Caco-2 (cell line): ENCODE measurements at regions of chr18 and their contacts with region 1.

Region 1: DNA sequence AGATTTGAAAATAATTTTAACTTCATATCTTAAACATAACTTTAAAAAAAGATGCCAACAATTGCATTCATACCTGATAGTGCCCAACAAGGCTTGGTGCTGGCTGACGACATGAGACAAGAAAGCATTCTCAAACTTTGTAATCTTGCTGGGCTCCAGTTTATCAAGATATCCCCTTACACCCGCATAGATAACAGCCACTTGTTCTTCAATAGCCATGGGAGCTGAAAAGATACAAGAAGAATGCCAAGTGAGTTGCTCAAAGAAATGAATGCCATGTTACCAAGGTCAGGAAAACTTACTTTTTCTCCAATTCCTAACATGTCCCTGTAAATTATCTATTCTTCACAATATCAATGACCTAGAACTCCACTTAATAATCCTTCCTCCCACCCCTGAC is 12.4 kb upstream of the PSTPIP2 start:
- DNase-seq: no peak
- H3K4me3 ChIP-seq: no peak overlapping the region
- H3K4me3 Mint-ChIP-seq: no peak overlapping the region
- H3K27ac Mint-ChIP-seq: no peak overlapping the region
- H3K4me1 ChIP-seq: peaks cover 22% of the 10 kb centered on the region
- H3K4me1 Mint-ChIP-seq: peaks cover 7% of the 10 kb centered on the region
- H3K27me3 ChIP-seq: no peaks in the 10 kb centered on the region
- H3K27me3 Mint-ChIP-seq: no peaks in the 10 kb centered on the region
- CTCF ChIP-seq: no peak

Region 2: DNA sequence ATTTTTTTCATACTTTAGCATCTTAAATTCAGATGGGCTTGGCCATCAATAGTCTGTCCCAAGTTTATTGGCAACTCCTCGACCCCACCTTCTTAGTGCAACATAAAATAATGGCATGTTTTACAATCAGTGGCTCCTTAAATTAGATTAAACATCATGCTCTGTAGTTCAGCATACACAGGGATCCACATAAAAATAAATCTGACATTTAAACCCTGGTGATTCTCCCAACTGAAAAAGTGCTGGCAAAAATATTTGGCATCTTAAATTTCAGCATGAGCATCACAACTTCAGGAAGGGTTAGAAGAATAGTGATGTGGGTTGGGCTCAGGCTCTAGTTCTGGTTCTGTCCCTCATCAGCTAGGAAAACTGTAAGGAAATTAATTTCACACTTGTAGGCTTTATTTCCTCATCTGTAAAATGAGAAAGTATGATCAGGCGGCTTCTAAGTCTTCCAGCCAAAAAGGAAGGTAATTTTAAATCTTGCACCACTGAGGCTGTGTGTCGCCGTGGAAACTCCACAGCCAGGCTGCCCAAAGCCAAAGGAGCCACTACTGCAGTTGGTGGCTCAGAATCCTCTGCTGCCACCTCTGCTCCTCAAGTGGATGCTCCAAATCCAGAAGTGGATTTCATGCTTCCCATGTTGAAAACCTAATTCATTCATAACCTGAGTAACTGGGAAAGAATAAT is 99.7 kb before region 1 on chr18:
- CTCF ChIA-PET with region 1: no interaction called
- POLR2A ChIA-PET with region 1: no interaction called
- intact Hi-C with region 1: no loop called
- DNase-seq: no peak
- H3K4me3 ChIP-seq: no peak overlapping the region
- H3K4me3 Mint-ChIP-seq: no peak overlapping the region
- H3K27ac Mint-ChIP-seq: no peak overlapping the region
- H3K4me1 ChIP-seq: peaks cover 12% of the 10 kb centered on the region
- H3K4me1 Mint-ChIP-seq: no peaks in the 10 kb centered on the region
- H3K27me3 ChIP-seq: no peaks in the 10 kb centered on the region
- H3K27me3 Mint-ChIP-seq: no peaks in the 10 kb centered on the region
- CTCF ChIP-seq: no peak

Region 3: DNA sequence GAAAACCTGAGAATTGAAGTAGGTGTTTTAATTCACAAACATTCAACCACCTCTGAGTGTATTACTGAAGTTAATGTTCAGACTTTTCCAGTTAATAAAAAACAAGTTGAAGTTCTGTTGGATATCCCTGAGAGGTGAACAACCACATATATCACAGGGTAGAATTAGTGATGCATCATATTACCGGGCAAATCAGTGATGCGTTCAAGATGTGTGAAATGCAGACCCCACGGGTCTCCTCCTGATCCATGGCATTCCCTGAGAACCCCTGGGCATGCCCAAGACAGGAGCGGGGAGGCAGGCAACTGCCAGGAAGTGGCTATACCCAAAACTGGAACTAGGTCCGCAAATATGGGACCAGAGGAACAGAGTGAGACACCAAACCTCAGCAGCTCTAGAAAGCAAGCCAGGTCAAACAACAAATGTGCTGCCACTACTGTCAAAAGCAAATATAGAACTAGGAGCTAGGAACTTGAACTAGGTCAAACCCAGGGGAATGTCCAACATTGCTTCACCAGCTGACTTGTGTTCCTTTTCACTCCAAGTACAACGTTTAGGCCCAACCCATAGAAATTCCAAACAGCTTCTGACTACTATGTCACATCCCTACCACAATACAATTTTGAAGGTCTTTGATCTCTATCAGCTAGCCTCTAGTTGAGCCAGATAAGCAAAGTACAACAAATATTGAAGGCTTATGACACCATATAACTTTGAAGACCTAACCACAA is 32.5 kb before region 1 on chr18:
- CTCF ChIA-PET with region 1: no interaction called
- POLR2A ChIA-PET with region 1: no interaction called
- intact Hi-C with region 1: loop called (anchors 1 kb)
- DNase-seq: peak; percentile 64 to 72
- H3K4me3 ChIP-seq: no peak overlapping the region
- H3K4me3 Mint-ChIP-seq: peak overlapping the region; percentile 27
- H3K27ac Mint-ChIP-seq: no peak overlapping the region
- H3K4me1 ChIP-seq: peaks cover 16% of the 10 kb centered on the region
- H3K4me1 Mint-ChIP-seq: peaks cover 18% of the 10 kb centered on the region
- H3K27me3 ChIP-seq: no peaks in the 10 kb centered on the region
- H3K27me3 Mint-ChIP-seq: no peaks in the 10 kb centered on the region
- CTCF ChIP-seq: no peak